CD4-positive, alpha-beta memory T cell (primary cell): ENCODE measurements at regions of chr1 and their contacts with region 1.

Region 1: DNA sequence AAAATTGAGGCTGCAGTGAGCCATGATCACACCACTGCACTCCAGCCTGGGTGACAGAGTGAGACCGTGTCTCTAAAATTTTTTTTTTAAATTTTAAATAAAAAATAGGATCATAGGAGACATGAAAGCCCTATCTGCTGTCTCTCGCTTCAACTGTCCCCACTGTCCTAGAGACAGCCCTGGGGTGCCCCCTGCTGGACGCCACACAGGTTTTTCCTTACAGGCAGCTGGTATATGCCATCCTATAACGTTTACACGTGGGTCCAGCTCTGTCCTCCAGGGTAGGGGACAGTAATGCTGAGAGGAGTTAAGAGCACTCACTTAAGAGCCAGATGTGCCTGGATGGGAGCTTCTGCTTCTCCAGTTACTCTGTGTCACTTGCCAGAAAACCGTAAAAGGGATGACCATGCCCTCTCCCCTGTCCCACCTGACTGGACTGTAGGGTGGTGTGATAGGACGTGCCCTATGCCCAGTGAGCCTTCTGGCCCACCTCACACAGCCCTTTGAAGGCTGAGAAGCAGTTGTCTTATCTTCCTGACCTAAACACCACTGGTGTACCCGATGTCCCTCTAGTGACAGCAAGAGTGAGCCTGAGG is 8.5 kb downstream of the FBXO2 start:
- DNase-seq: peak; percentile 71 to 75 (median 73)
- H3K4me3 ChIP-seq: no peak overlapping the region
- H3K4me3 Mint-ChIP-seq: no peak overlapping the region
- H3K27ac ChIP-seq: no peak overlapping the region
- H3K27ac Mint-ChIP-seq: no peak overlapping the region
- H3K4me1 ChIP-seq: peaks cover 15% of the 10 kb centered on the region
- H3K4me1 Mint-ChIP-seq: peaks cover 5 to 21% (median 12%) of the 10 kb centered on the region in 4 donors
- H3K27me3 ChIP-seq: no peaks in the 10 kb centered on the region
- H3K27me3 Mint-ChIP-seq: peaks cover 0 to 2% of the 10 kb centered on the region in 2 donors

Region 2: GRCh38 chr1:11099310-11100149 is 546.2 kb before region 1 on chr1 and contains the start of gene EXOSC10:
- CTCF ChIA-PET with region 1: interaction called, 12 read pairs
- POLR2A ChIA-PET with region 1: no interaction called
- intact Hi-C with region 1: no loop called
- DNase-seq: peak; percentile 93 to 95 (median 94)
- H3K4me3 ChIP-seq: peak within 1 kb of the TSS; percentile 93 to 96
- H3K4me3 Mint-ChIP-seq: peak within 1 kb of the TSS; percentile 92 to 98 (median 96)
- H3K27ac ChIP-seq: peak within 1 kb of the TSS; percentile 89
- H3K27ac Mint-ChIP-seq: peak within 1 kb of the TSS; percentile 89 to 97 (median 96)
- H3K4me1 ChIP-seq: peaks cover 18% of the 10 kb centered on the region
- H3K4me1 Mint-ChIP-seq: peaks cover 8 to 23% (median 12%) of the 10 kb centered on the region in 4 donors
- H3K27me3 ChIP-seq: no peaks in the 10 kb centered on the region
- H3K27me3 Mint-ChIP-seq: no peaks in the 10 kb centered on the region
- total RNA-seq, gene EXOSC10: 78.9 to 84.4 TPM

Region 3: GRCh38 chr1:11248155-11248554 is 397.6 kb before region 1 on chr1:
- CTCF ChIA-PET with region 1: interaction called, 187 read pairs
- POLR2A ChIA-PET with region 1: no interaction called
- intact Hi-C with region 1: no loop called
- DNase-seq: no peak
- H3K4me3 ChIP-seq: no peak overlapping the region
- H3K4me3 Mint-ChIP-seq: no peak overlapping the region
- H3K27ac ChIP-seq: no peak overlapping the region
- H3K27ac Mint-ChIP-seq: peak overlapping the region in 6 of 7 donors; percentile 50 to 85 (median 72)
- H3K4me1 ChIP-seq: peaks cover 38% of the 10 kb centered on the region
- H3K4me1 Mint-ChIP-seq: peaks cover 19 to 32% (median 23%) of the 10 kb centered on the region in 4 donors
- H3K27me3 ChIP-seq: no peaks in the 10 kb centered on the region
- H3K27me3 Mint-ChIP-seq: no peaks in the 10 kb centered on the region

Region 4: DNA sequence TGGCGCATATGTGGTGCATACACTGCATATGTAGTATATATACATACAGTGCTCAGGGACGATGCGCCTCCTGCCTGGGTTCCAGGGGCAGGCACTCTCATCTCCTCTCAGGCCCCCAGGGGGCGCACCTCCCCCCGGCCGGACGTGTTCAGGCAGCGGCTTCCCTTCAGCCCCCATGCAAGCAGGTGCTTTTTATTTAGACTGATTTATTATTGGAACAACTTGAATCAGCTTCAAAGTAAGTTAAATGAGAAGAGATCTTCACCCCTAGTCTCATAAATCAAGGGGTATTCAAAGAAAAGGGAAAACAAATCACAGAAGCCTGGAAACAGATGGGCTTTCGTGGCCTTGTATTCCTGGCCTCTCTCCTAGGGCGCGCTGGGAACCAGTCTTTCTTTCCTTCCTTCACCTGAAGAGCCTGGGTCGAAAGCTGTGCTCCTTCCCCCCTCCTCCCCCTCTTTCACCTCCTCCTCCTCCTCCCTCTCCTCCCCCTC is 308.1 kb before region 1 on chr1:
- CTCF ChIA-PET with region 1: interaction called, 7 read pairs
- POLR2A ChIA-PET with region 1: no interaction called
- intact Hi-C with region 1: loop called (anchors 1 kb)
- DNase-seq: peak; percentile 44 to 63 (median 57)
- H3K4me3 ChIP-seq: no peak overlapping the region
- H3K4me3 Mint-ChIP-seq: no peak overlapping the region
- H3K27ac ChIP-seq: no peak overlapping the region
- H3K27ac Mint-ChIP-seq: no peak overlapping the region
- H3K4me1 ChIP-seq: no peaks in the 10 kb centered on the region
- H3K4me1 Mint-ChIP-seq: peaks cover 0 to 7% (median 4%) of the 10 kb centered on the region in 4 donors
- H3K27me3 ChIP-seq: no peaks in the 10 kb centered on the region
- H3K27me3 Mint-ChIP-seq: peaks cover 14 to 15% of the 10 kb centered on the region in 2 donors

Region 5: DNA sequence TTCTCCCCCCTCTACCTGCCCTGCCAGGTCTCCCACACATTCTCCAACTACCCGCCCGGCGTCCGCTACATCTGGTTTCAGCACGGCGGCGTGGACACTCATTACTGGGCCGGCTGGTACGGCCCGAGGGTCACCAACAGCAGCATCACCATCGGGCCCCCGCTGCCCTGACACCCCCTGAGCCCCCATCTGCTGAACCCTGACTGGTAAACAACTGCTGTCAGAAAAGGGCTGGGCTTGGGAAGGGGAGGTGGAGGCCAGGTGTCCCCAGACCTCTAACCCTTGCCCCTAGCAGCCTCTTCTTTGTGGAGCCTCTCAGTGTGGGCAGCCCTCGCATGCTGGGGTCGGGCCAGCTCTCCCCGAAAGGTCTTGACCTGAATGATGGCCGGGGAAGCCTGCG is 15.3 kb after region 1 on chr1:
- CTCF ChIA-PET with region 1: interaction called, 26 read pairs
- POLR2A ChIA-PET with region 1: interaction called, 73 read pairs
- intact Hi-C with region 1: no loop called
- DNase-seq: no peak
- H3K4me3 ChIP-seq: no peak overlapping the region
- H3K4me3 Mint-ChIP-seq: no peak overlapping the region
- H3K27ac ChIP-seq: no peak overlapping the region
- H3K27ac Mint-ChIP-seq: no peak overlapping the region
- H3K4me1 ChIP-seq: peaks cover 8% of the 10 kb centered on the region
- H3K4me1 Mint-ChIP-seq: peaks cover 0 to under 1% (median 0%) of the 10 kb centered on the region in 4 donors
- H3K27me3 ChIP-seq: no peaks in the 10 kb centered on the region
- H3K27me3 Mint-ChIP-seq: no peaks in the 10 kb centered on the region

Region 6: GRCh38 chr1:11681071-11681771 is 35.5 kb after region 1 on chr1 and contains the start of gene MAD2L2:
- CTCF ChIA-PET with region 1: interaction called, 6 read pairs
- POLR2A ChIA-PET with region 1: interaction called, 11 read pairs
- intact Hi-C with region 1: no loop called
- DNase-seq: peak; percentile 87 to 89 (median 88)
- H3K4me3 ChIP-seq: peak within 1 kb of the TSS; percentile 52 to 87
- H3K4me3 Mint-ChIP-seq: peak within 1 kb of the TSS; percentile 93 to 99 (median 96)
- H3K27ac ChIP-seq: peak within 1 kb of the TSS; percentile 76
- H3K27ac Mint-ChIP-seq: peak within 1 kb of the TSS; percentile 89 to 96 (median 91)
- H3K4me1 ChIP-seq: peaks cover 21% of the 10 kb centered on the region
- H3K4me1 Mint-ChIP-seq: peaks cover 10 to 25% (median 18%) of the 10 kb centered on the region in 4 donors
- H3K27me3 ChIP-seq: no peaks in the 10 kb centered on the region
- H3K27me3 Mint-ChIP-seq: peaks cover 2 to 5% of the 10 kb centered on the region in 2 donors
- total RNA-seq, gene MAD2L2: 20.7 to 22.7 TPM

Region 7: DNA sequence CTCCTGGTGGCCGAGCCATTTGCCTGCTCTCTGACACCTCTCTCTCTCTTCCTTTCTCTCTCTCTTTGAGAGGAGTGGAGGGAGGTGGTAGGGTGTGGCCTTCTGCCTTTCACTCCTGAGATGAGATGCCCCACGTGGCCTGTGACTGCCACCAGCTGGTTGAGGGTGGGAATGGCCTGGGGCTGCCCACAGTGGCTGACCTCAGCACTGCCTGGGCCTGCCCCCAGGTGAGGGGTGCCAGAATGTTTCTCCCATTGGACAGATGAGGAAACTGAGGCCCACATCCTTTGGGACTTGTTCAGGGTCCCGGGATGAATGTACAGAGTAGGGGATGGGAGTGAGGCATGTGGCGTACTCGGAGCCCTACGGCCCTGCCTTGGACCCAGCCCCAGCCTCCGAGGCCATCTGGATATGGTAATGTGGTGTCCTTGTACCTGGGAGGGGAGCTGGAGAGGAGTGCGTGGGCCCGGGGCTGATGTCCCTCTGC is 103.5 kb after region 1 on chr1:
- CTCF ChIA-PET with region 1: interaction called, 4 read pairs
- POLR2A ChIA-PET with region 1: interaction called, 4 read pairs
- intact Hi-C with region 1: loop called (anchors 1 kb)
- DNase-seq: peak; percentile 38 to 64 (median 51)
- H3K4me3 ChIP-seq: no peak overlapping the region
- H3K4me3 Mint-ChIP-seq: no peak overlapping the region
- H3K27ac ChIP-seq: no peak overlapping the region
- H3K27ac Mint-ChIP-seq: peak overlapping the region in 6 of 7 donors; percentile 53 to 92 (median 86)
- H3K4me1 ChIP-seq: peaks cover 9% of the 10 kb centered on the region
- H3K4me1 Mint-ChIP-seq: peaks cover 9 to 31% (median 19%) of the 10 kb centered on the region in 4 donors
- H3K27me3 ChIP-seq: no peaks in the 10 kb centered on the region
- H3K27me3 Mint-ChIP-seq: no peaks in the 10 kb centered on the region